ENCODE measurements at regions of chr9 and their contacts with region 1.

Region 1: GRCh38 chr9:136944519-136945279 is at the starts of genes C8G and FBXW5:
- DNase-seq: peak; percentile 98
- total RNA-seq, gene C8G: 3.4 TPM
- total RNA-seq, gene FBXW5: 162 TPM

Region 2: GRCh38 chr9:136790927-136791641 is 153.6 kb before region 1 on chr9 and contains the start of gene TMEM141:
- intact Hi-C with region 1: loop called (anchors 2 kb)
- DNase-seq: peak; percentile 100
- total RNA-seq, gene TMEM141: 62.5 TPM

Region 3: DNA sequence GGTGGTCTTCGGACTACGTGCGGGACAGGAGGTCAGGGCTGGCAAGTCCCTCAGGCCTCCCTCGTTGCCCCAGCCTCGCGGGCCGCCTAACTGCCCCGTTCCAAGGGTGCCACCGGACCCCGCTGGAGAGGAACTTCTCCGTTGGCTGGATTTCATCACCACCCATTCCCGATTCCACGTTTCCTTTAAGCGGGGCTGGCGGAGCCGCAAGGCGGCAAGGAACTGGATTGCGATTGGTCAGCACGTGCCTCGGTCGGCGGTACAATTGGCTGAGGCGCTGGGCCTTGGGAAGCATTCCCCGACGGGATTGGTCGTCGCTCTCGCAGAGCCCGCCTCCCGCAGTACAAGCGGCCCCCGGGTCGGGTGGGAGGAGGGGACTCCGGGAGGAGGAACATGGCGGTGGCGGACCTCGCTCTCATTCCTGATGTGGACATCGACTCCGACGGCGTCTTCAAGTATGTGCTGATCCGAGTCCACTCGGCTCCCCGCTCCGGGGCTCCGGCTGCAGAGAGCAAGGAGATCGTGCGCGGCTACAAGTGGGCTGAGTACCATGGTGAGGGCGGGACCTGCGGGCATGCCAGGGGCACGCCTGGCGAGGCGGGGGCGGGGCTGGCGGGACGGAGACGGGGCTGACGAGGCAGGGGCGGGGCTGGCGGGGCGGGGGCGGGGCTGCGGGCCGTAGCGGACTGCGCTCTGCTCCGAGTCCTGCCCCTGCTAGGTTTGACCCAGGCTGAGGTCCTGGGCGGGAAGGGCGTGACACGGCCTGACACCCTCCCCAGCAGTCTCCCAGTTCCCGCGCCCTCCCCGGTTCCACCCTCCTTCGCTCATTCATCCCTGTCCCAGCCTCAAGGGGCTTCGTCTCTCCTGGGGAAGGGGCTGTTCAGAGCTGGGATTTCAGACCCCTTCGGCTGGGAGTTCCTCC is 95.4 kb before region 1 on chr9 and contains the start of gene PHPT1:
- intact Hi-C with region 1: loop called (anchors 2 kb)
- DNase-seq: peak; percentile 99
- total RNA-seq, gene PHPT1: 296 TPM

Region 4: DNA sequence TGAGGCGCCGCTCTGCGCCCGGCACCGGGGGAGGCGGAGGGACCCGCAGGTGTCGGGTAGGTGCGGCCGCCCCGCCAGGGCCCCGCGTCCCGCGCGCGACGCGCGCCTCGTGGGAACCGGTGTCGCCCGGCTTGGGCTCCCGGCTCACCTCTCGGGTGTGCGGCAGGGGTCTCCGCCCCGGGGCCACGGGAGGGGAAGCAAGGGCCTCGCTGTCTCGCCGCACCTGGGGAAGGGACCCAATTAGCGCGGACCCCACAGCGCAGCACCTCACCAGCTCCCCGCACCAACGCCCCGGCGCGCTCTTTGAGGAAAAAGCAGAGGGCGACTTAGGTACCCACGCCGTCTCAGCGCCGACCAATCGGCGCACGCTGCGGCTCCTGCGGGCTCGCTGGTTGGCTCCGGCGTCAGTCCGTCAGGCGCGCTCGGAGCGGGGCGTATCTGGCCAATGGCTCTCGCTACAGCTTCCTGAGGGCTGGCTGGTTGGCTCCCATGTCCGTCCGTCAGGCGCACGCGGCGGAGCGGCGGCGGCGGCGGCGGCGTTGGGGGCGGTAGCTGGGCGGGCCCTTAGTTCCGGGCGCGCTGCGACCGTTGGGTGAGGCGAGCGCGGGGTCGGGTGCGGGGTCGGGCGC is 58.6 kb before region 1 on chr9 and contains the start of gene TRAF2:
- intact Hi-C with region 1: loop called (anchors 5 kb)
- DNase-seq: peak; percentile 99
- total RNA-seq, gene TRAF2: 10.2 TPM

Region 5: DNA sequence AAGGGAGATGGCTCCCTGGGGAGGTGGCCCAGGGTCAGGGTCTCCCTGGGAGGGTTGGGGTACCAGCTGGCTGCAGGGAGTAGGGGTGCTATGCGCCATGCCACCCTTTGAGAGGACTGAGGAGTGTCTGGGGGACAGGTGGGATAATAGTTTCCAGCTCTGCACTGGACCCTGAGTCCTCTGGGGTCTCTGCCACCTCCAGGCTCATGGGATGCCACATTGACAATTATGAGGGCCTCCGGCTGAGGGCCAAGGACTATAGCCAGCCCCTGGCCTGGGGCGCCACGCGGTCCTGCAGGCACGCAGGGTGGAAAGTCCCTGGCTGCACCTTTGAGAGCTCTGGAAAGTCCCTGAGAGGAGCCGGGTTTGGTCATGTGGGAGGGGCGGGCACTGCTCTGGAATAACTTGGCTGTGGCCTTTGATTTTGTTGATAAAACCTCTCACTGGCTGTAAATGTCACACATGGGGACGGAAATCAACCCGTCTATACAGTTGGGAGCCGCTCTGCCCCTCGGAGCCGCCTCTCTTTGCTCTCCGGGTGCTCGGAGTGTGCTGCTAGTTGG is 42.4 kb before region 1 on chr9:
- intact Hi-C with region 1: loop called (anchors 2 kb)
- DNase-seq: peak; percentile 89

Region 6: GRCh38 chr9:136928591-136928990 is 16.1 kb before region 1 on chr9:
- intact Hi-C with region 1: loop called (anchors 1 kb)
- DNase-seq: no peak